Activated T-helper 1 cell treated with anti-CD3 and anti-CD28 coated beads, Interleukin-12 subunit alpha, Interleukin-12 subunit beta, Interleukin-2, Interleukin-4 antibody, amounts not matched to agents 30 ng/mL and 10 ng/mL and 1 ng/mL, durations not matched to agents 14 hours and 24 hours and 36 hours (primary cell): ENCODE measurements at regions of chr14 and their contacts with region 1.

Region 1: DNA sequence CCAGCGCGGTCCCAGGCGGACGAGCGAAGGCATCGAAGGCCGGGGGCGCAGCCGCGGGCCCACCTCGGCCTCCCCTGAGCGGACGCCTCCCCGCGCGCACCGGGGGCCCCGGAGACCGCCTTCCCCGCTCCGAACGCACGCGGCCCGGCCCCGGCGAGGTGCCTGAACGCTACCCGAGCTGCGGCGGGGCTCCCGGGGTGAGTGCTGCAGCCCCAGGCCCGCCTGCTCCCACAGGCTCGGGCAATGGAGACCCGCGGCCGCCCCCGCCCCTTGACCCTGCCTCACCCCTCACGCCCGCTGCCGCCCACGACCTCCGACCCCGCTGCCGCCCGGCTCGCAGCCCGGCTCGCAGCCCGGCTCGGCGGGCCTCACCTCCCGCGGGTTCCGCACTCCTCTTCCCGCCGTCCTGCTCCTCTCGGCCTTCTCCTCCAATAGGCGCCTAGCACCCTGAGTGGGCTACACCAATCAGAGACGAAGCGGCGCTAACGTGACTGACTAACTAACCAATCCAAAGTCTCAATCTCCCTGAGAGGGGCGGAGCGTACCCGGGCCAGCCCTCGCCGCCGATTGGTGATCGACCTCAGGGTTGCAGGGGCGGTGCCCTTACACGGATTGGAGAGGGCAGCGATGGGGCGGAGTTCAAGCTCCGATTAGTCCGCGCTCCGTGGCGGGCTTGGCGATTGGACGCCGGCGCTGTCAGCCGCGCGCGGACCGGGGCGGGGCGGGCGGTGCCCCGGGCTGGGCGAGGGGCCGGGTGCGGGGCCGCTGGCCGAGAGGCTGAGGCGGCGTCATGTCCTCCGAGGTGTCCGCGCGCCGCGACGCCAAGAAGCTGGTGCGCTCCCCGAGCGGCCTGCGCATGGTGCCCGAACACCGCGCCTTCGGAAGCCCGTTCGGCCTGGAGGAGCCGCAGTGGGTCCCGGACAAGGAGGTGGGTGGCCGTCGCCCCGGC is at the starts of genes XRCC3 and ZFYVE21:
- DNase-seq: peak; percentile 100
- H3K4me3 Mint-ChIP-seq: peak within 1 kb of the TSS; percentile 93
- H3K27ac Mint-ChIP-seq: peak within 1 kb of the TSS; percentile 93
- H3K4me1 Mint-ChIP-seq: peaks cover 48% of the 10 kb centered on the region
- H3K27me3 Mint-ChIP-seq: no peaks in the 10 kb centered on the region
- total RNA-seq, gene XRCC3: 67.1 and 69.5 TPM in 2 replicates
- total RNA-seq, gene ZFYVE21: 21.5 and 24.7 TPM in 2 replicates

Region 2: GRCh38 chr14:103385152-103385993 is 330.0 kb before region 1 on chr14 and contains the start of gene MARK3:
- intact Hi-C with region 1: loop called (anchors 1 kb)
- DNase-seq: peak; percentile 97
- H3K4me3 Mint-ChIP-seq: peak within 1 kb of the TSS; percentile 99
- H3K27ac Mint-ChIP-seq: peak within 1 kb of the TSS; percentile 98
- H3K4me1 Mint-ChIP-seq: peaks cover 57% of the 10 kb centered on the region
- H3K27me3 Mint-ChIP-seq: peaks cover 5% of the 10 kb centered on the region
- total RNA-seq, gene MARK3: 89.6 and 90.6 TPM in 2 replicates

Region 3: DNA sequence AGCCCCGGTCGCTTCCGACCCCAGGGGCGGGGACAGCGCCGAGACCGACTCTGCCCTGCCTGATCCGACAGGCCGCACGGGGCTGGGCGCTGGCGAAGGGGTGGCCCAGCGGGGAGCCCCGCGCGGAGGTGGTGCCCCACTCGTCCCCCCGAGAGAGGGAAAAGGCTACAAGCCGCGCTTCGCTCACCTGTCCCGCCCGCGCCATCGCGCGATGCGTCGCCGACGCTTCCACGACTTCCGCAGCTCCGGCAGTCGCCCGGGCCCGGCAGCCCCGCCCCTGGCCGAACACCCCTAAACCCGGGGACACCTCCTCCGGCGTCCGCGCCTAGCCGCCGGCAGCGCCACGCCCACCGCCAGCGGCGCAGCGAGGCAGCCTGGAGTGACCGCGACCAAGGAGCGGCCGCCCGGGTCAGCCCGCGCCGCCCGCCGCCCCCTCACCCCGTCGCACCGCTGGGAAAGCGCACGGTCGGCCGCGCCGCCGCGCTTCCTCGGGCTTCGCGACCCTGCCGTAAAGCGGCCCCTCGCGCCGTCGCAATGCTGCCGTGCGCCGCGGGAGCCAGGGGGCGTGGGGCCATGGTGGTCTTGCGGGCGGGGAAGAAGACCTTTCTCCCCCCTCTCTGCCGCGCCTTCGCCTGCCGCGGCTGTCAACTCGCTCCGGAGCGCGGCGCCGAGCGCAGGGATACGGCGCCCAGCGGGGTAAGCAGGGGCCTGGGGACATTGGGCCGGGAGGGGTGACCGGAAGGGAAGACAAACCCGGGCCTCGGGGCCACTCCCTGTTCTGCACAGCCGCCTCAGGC is 152.7 kb before region 1 on chr14 and contains the starts of genes BAG5 and COA8:
- intact Hi-C with region 1: loop called (anchors 2 kb)
- DNase-seq: peak; percentile 83
- H3K4me3 Mint-ChIP-seq: peak within 1 kb of the TSS; percentile 96
- H3K27ac Mint-ChIP-seq: peak within 1 kb of the TSS; percentile 94
- H3K4me1 Mint-ChIP-seq: peaks cover 29% of the 10 kb centered on the region
- H3K27me3 Mint-ChIP-seq: no peaks in the 10 kb centered on the region
- total RNA-seq, gene BAG5: 33.8 and 34.1 TPM in 2 replicates
- total RNA-seq, gene COA8: 37.2 and 39.7 TPM in 2 replicates

Region 4: GRCh38 chr14:103628684-103629502 is 86.4 kb before region 1 on chr14 and contains the start of gene KLC1:
- intact Hi-C with region 1: loop called (anchors 1 kb)
- DNase-seq: peak; percentile 78
- H3K4me3 Mint-ChIP-seq: peak within 1 kb of the TSS; percentile 89
- H3K27ac Mint-ChIP-seq: peak within 1 kb of the TSS; percentile 86
- H3K4me1 Mint-ChIP-seq: peaks cover 14% of the 10 kb centered on the region
- H3K27me3 Mint-ChIP-seq: no peaks in the 10 kb centered on the region
- total RNA-seq, gene KLC1: 148 and 150 TPM in 2 replicates

Region 5: GRCh38 chr14:103847451-103848188 is 132.3 kb after region 1 on chr14 and contains the start of gene PPP1R13B:
- intact Hi-C with region 1: loop called (anchors 1 kb)
- DNase-seq: peak; percentile 87
- H3K4me3 Mint-ChIP-seq: peak within 1 kb of the TSS; percentile 85
- H3K27ac Mint-ChIP-seq: peak within 1 kb of the TSS; percentile 51
- H3K4me1 Mint-ChIP-seq: peaks cover 15% of the 10 kb centered on the region
- H3K27me3 Mint-ChIP-seq: peaks cover 20% of the 10 kb centered on the region
- total RNA-seq, gene PPP1R13B: 9.6 and 9.8 TPM in 2 replicates

Region 6: DNA sequence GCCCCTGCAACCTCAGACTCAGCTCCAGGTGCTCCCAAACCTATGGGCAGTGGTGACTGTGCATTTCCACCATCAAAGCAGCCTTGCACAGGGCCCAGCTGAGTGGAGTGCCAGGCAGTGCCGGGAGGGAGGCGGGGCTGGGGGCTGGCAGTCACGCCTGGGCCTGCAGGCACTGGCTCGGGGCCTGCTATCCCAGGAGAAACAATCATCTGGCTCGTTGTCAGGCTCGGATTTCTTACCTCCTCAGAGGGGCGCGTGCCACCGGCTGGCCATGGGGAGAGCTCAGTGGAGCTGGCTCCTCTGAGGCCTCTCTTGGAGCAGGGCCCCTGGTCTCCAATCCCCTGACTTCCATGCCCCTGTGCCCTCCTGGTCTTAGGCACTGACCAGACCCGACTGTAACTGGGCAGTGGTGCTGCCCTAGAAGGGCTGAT is 152.2 kb after region 1 on chr14:
- intact Hi-C with region 1: no loop called
- DNase-seq: no peak
- H3K4me3 Mint-ChIP-seq: no peak overlapping the region
- H3K27ac Mint-ChIP-seq: no peak overlapping the region
- H3K4me1 Mint-ChIP-seq: peaks cover 4% of the 10 kb centered on the region
- H3K27me3 Mint-ChIP-seq: peaks cover 5% of the 10 kb centered on the region